ENCODE measurements at regions of chr6 and their contacts with region 1.

Region 1: GRCh38 chr6:166786704-166787293 is 159.7 kb upstream of the RPS6KA2 start:
- DNase-seq: peak; percentile 72
- CTCF ChIP-seq: peak; percentile 53

Region 2: GRCh38 chr6:166815629-166816028 is 28.8 kb after region 1 on chr6:
- CTCF ChIA-PET with region 1: no interaction called
- POLR2A ChIA-PET with region 1: no interaction called
- DNase-seq: no peak
- CTCF ChIP-seq: no peak

Region 3: GRCh38 chr6:166950443-166950821 is 163.6 kb after region 1 on chr6:
- CTCF ChIA-PET with region 1: interaction called, 10 read pairs
- POLR2A ChIA-PET with region 1: no interaction called
- DNase-seq: peak; percentile 71
- CTCF ChIP-seq: no peak

Region 4: GRCh38 chr6:167298153-167298552 is 511.4 kb after region 1 on chr6:
- CTCF ChIA-PET with region 1: no interaction called
- POLR2A ChIA-PET with region 1: no interaction called
- DNase-seq: no peak
- CTCF ChIP-seq: no peak